Activated CD8-positive, alpha-beta T cell treated with anti-CD3 and anti-CD28 coated beads, Interleukin-2, amount 10 ng/mL, durations not matched to agents 7 days and 5 days (primary cell): ENCODE measurements at regions of chr11 and their contacts with region 1.

Region 1: GRCh38 chr11:108222686-108223448 is at the start of gene ATM:
- DNase-seq: peak; percentile 99
- ATAC-seq: peak; percentile 86
- H3K4me3 Mint-ChIP-seq: no peak within 1 kb of the TSS
- H3K27ac Mint-ChIP-seq: no peak within 1 kb of the TSS
- H3K4me1 Mint-ChIP-seq: peaks cover 39% of the 10 kb centered on the region
- H3K27me3 Mint-ChIP-seq: no peaks in the 10 kb centered on the region
- total RNA-seq, gene ATM: 206 to 214 TPM

Region 2: GRCh38 chr11:108237058-108237481 is 14.2 kb after region 1 on chr11:
- CTCF ChIA-PET with region 1: interaction called, 111 read pairs
- POLR2A ChIA-PET with region 1: interaction called, 375 read pairs
- DNase-seq: no peak
- ATAC-seq: peak; percentile 45
- H3K4me3 Mint-ChIP-seq: peak overlapping the region; percentile 70
- H3K27ac Mint-ChIP-seq: peak overlapping the region; percentile 96
- H3K4me1 Mint-ChIP-seq: peaks cover 83% of the 10 kb centered on the region
- H3K27me3 Mint-ChIP-seq: no peaks in the 10 kb centered on the region

Region 3: DNA sequence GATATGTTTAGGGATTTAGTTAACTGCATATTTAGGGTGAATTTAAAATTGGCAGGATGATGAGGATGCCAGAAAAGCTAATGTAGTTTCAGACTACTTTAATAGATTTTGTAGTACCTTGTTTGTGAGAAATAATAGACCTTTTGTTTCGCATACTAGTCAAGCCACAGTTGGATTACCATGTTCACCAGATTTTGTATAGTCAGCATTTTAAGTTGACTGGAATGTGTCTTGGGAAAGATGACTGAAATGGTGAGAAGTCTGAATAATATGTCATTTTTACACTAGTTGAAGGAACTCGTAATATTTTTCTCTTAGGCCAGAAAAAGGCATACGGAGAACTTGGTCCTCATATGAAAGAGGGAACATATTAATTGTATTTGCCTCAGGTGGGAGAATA is 23.4 kb after region 1 on chr11:
- CTCF ChIA-PET with region 1: interaction called, 111 read pairs
- POLR2A ChIA-PET with region 1: interaction called, 375 read pairs
- DNase-seq: no peak
- ATAC-seq: no peak
- H3K4me3 Mint-ChIP-seq: no peak overlapping the region
- H3K27ac Mint-ChIP-seq: no peak overlapping the region
- H3K4me1 Mint-ChIP-seq: peaks cover 32% of the 10 kb centered on the region
- H3K27me3 Mint-ChIP-seq: no peaks in the 10 kb centered on the region

Region 4: DNA sequence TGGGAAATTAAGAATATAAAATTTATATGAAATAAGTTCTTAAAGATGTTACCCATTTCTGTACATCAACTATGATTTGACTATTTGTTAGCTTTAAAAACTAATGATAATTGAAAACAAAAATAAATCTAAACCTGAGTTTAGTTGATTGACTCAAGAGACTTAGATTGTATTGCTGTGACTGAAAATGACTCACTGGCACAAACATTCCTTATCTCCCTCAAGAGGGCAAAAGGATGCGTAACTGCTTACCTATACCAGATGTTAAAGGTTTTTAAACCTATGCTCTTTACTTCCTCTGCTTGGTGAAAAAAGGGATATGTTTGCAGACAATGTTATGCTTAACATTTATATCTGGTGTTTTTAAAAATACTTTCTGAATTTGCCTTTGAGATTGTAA is 30.3 kb after region 1 on chr11:
- CTCF ChIA-PET with region 1: interaction called, 13 read pairs
- POLR2A ChIA-PET with region 1: interaction called, 18 read pairs
- DNase-seq: no peak
- ATAC-seq: no peak
- H3K4me3 Mint-ChIP-seq: no peak overlapping the region
- H3K27ac Mint-ChIP-seq: no peak overlapping the region
- H3K4me1 Mint-ChIP-seq: peaks cover 12% of the 10 kb centered on the region
- H3K27me3 Mint-ChIP-seq: no peaks in the 10 kb centered on the region

Region 5: GRCh38 chr11:108393046-108393445 is 170.2 kb after region 1 on chr11:
- CTCF ChIA-PET with region 1: no interaction called
- POLR2A ChIA-PET with region 1: no interaction called
- DNase-seq: no peak
- ATAC-seq: no peak
- H3K4me3 Mint-ChIP-seq: no peak overlapping the region
- H3K27ac Mint-ChIP-seq: no peak overlapping the region
- H3K4me1 Mint-ChIP-seq: no peaks in the 10 kb centered on the region
- H3K27me3 Mint-ChIP-seq: no peaks in the 10 kb centered on the region